ENCODE measurements at regions of chr12 and their contacts with region 1.

Region 1: DNA sequence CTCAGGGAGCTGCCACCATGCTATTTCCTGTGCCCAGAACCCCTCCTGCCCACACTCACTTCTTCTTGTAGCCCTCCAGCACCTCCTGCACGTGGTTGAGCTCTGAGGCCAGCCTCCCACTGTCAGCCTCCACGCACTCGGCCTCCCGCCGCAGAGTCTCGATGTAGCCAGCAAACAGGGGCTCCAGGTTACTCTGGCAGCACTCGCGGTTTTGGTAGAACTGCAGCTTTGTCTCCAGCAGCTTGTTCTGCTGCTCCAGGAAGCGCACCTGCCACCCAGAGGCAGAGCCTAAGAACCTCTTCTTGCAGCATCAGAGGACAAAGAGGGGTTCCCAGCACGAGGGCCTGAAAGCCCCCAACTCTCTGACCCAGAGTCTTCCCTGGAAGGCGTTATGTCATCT is 2.1 kb downstream of the KRT83 start:
- DNase-seq: no peak
- H3K4me3 ChIP-seq: no peak overlapping the region
- CTCF ChIP-seq: no peak

Region 2: GRCh38 chr12:52307836-52308805 is 11.0 kb before region 1 on chr12:
- CTCF ChIA-PET with region 1: interaction called, 182 read pairs
- POLR2A ChIA-PET with region 1: no interaction called
- DNase-seq: no peak
- H3K4me3 ChIP-seq: peak overlapping the region; percentile 53
- CTCF ChIP-seq: no peak

Measured in AG04449 (cell line).